MCF 10A (cell line): ENCODE measurements at regions of chr2 and their contacts with region 1.

Region 1: GRCh38 chr2:27703638-27704341 is 40.1 kb downstream of the SLC4A1AP start:
- DNase-seq: peak; percentile 87
- H3K4me3 Mint-ChIP-seq: no peak overlapping the region
- H3K27ac Mint-ChIP-seq: no peak overlapping the region
- H3K4me1 Mint-ChIP-seq: peaks cover 47% of the 10 kb centered on the region
- H3K27me3 Mint-ChIP-seq: no peaks in the 10 kb centered on the region
- CTCF ChIP-seq: peak; percentile 76

Region 2: GRCh38 chr2:27606611-27607010 is 97.2 kb before region 1 on chr2:
- CTCF ChIA-PET with region 1: no interaction called
- POLR2A ChIA-PET with region 1: no interaction called
- intact Hi-C with region 1: no loop called
- DNase-seq: no peak
- H3K4me3 Mint-ChIP-seq: no peak overlapping the region
- H3K27ac Mint-ChIP-seq: no peak overlapping the region
- H3K4me1 Mint-ChIP-seq: no peaks in the 10 kb centered on the region
- H3K27me3 Mint-ChIP-seq: no peaks in the 10 kb centered on the region
- CTCF ChIP-seq: no peak

Region 3: GRCh38 chr2:27683390-27684071 is 20.3 kb before region 1 on chr2:
- CTCF ChIA-PET with region 1: interaction called, 23 read pairs
- POLR2A ChIA-PET with region 1: interaction called, 18 read pairs
- intact Hi-C with region 1: no loop called
- DNase-seq: peak; percentile 94
- H3K4me3 Mint-ChIP-seq: peak overlapping the region; percentile 35
- H3K27ac Mint-ChIP-seq: peak overlapping the region; percentile 59
- H3K4me1 Mint-ChIP-seq: peaks cover 29% of the 10 kb centered on the region
- H3K27me3 Mint-ChIP-seq: no peaks in the 10 kb centered on the region
- CTCF ChIP-seq: peak; percentile 99

Region 4: DNA sequence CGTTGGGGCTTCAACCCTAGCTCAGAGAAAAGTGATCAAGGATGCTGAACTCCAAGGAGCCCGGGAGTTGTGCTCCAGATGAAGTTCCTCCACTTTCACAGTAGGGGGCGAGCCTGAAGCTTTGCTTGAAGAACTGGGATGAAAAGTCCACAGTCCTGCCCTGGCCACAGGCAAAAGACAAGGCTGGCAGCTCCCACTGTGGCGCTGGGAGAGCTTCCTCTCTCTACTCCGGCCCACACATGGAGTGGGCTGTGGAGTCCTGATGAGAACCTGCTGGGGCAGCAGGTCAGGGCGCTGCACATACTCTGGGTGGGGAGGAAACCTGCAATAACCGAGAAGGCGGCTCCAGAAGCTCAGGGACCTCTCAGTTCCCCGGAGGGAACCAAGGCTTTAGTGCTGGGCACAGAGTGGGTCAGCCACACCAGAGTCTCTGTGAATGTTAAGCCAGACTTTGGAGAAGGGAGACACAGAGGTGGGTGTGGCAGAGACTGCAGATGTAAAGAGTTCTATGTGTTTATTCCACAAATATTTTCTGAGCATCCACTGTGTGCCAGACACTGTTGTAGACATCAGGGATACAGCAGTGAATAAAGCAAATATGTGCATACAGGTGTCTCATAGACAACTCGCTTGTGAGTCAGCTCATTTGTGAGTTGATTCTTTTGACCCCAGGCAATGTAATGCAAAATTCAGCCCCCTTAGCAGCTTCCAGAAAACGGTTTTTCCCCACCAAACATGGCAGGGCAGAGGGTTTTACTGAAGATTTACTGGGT is 19.8 kb after region 1 on chr2:
- CTCF ChIA-PET with region 1: interaction called, 13 read pairs
- POLR2A ChIA-PET with region 1: interaction called, 14 read pairs
- intact Hi-C with region 1: no loop called
- DNase-seq: peak; percentile 75
- H3K4me3 Mint-ChIP-seq: no peak overlapping the region
- H3K27ac Mint-ChIP-seq: no peak overlapping the region
- H3K4me1 Mint-ChIP-seq: peaks cover 24% of the 10 kb centered on the region
- H3K27me3 Mint-ChIP-seq: no peaks in the 10 kb centered on the region
- CTCF ChIP-seq: peak; percentile 73

Region 5: DNA sequence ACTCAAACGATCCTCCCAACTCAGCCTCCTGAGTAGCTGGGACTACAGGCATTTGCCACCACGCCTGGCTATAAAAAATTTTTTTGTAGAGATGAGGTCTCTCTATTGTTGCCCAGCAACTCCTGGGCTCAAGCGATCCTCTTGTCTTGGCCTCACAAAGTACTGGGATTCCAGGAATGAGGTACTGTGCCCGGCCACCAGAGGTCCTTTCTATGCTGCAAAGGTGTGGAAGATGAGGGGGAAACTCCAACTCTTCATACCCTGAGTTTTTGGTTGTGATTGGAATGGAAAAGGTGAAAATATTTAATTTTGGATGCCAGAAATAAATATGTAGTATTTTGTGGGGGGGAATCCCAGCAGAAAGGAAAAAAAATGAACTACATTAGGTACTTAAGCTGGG is 103.7 kb after region 1 on chr2:
- CTCF ChIA-PET with region 1: interaction called, 4 read pairs
- POLR2A ChIA-PET with region 1: interaction called, 10 read pairs
- intact Hi-C with region 1: no loop called
- DNase-seq: peak; percentile 55
- H3K4me3 Mint-ChIP-seq: no peak overlapping the region
- H3K27ac Mint-ChIP-seq: no peak overlapping the region
- H3K4me1 Mint-ChIP-seq: peaks cover 39% of the 10 kb centered on the region
- H3K27me3 Mint-ChIP-seq: no peaks in the 10 kb centered on the region
- CTCF ChIP-seq: peak; percentile 47

Region 6: DNA sequence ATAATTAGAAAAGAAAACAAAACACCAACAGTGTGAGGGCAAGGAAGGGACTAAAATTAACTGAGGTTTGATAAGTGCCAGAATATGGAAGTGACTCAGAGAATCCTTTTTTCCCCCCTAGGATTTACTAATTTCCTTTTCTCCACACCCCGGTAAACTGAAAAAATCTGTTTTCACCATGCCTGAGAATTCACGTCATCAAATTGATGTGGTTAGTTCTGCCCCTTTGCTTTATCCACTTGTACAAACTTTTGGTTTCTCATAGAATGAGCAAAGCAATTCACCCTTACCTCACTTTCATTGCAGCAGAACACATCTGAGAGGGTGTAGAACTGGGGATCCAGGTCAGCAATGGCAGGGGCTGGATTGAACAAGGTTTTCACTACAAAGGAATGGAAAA is 128.6 kb after region 1 on chr2:
- CTCF ChIA-PET with region 1: no interaction called
- POLR2A ChIA-PET with region 1: no interaction called
- intact Hi-C with region 1: no loop called
- DNase-seq: no peak
- H3K4me3 Mint-ChIP-seq: no peak overlapping the region
- H3K27ac Mint-ChIP-seq: no peak overlapping the region
- H3K4me1 Mint-ChIP-seq: peaks cover 4% of the 10 kb centered on the region
- H3K27me3 Mint-ChIP-seq: no peaks in the 10 kb centered on the region
- CTCF ChIP-seq: no peak

Region 7: GRCh38 chr2:27954771-27955383 is 251.1 kb after region 1 on chr2:
- CTCF ChIA-PET with region 1: no interaction called
- POLR2A ChIA-PET with region 1: interaction called, 7 read pairs
- intact Hi-C with region 1: loop called (anchors 1 kb)
- DNase-seq: peak; percentile 98
- H3K4me3 Mint-ChIP-seq: peak overlapping the region; percentile 2
- H3K27ac Mint-ChIP-seq: peak overlapping the region; percentile 93
- H3K4me1 Mint-ChIP-seq: peaks cover 58% of the 10 kb centered on the region
- H3K27me3 Mint-ChIP-seq: no peaks in the 10 kb centered on the region
- CTCF ChIP-seq: peak; percentile 29

Region 8: DNA sequence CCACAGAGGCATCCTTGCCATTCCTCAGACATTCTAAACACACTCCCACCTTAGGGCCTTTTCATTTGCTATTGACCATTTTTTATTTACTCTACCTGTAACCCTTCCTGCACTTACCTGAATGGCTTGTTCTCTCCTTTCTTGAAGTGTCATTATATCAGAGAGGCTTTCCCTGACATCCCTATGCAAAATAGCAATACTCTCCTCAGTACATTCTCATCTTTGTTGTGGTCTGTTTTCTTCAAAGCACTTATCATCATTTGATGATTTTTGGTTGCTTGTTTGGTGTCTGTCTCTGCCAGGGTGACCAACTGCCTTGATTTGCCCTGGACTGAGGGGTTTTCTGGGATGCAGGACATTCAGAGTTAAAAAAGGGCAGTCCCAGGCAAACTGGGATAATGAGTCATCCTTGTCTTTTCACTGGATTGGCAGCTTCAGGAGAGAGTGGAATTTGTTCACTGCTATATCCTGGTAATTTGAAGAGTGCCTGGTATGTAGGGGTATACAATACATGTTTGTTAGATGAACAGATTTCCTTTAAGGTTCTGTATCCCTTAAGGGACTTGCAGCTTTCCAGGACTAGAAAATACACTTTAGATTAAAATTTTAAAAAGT is 289.1 kb after region 1 on chr2:
- CTCF ChIA-PET with region 1: no interaction called
- POLR2A ChIA-PET with region 1: no interaction called
- intact Hi-C with region 1: no loop called
- DNase-seq: peak; percentile 77
- H3K4me3 Mint-ChIP-seq: no peak overlapping the region
- H3K27ac Mint-ChIP-seq: no peak overlapping the region
- H3K4me1 Mint-ChIP-seq: peaks cover 43% of the 10 kb centered on the region
- H3K27me3 Mint-ChIP-seq: no peaks in the 10 kb centered on the region
- CTCF ChIP-seq: no peak

Region 9: GRCh38 chr2:28338046-28338817 is 634.4 kb after region 1 on chr2:
- CTCF ChIA-PET with region 1: no interaction called
- POLR2A ChIA-PET with region 1: no interaction called
- intact Hi-C with region 1: loop called (anchors 5 kb)
- DNase-seq: peak; percentile 82
- H3K4me3 Mint-ChIP-seq: no peak overlapping the region
- H3K27ac Mint-ChIP-seq: peak overlapping the region; percentile 86
- H3K4me1 Mint-ChIP-seq: peaks cover 19% of the 10 kb centered on the region
- H3K27me3 Mint-ChIP-seq: no peaks in the 10 kb centered on the region
- CTCF ChIP-seq: no peak

Region 10: GRCh38 chr2:28751252-28751955 is 1047.6 kb after region 1 on chr2 and contains the start of gene PPP1CB:
- CTCF ChIA-PET with region 1: no interaction called
- POLR2A ChIA-PET with region 1: interaction called, 3 read pairs
- intact Hi-C with region 1: loop called (anchors 10 kb)
- DNase-seq: peak; percentile 92
- H3K4me3 Mint-ChIP-seq: peak within 1 kb of the TSS; percentile 95
- H3K27ac Mint-ChIP-seq: peak within 1 kb of the TSS; percentile 98
- H3K4me1 Mint-ChIP-seq: peaks cover 20% of the 10 kb centered on the region
- H3K27me3 Mint-ChIP-seq: no peaks in the 10 kb centered on the region
- CTCF ChIP-seq: peak; percentile 21
- total RNA-seq, gene PPP1CB: 244 and 269 TPM in 2 replicates